PC-9 (cell line): ENCODE measurements at regions of chr3 and their contacts with region 1.

Region 1: DNA sequence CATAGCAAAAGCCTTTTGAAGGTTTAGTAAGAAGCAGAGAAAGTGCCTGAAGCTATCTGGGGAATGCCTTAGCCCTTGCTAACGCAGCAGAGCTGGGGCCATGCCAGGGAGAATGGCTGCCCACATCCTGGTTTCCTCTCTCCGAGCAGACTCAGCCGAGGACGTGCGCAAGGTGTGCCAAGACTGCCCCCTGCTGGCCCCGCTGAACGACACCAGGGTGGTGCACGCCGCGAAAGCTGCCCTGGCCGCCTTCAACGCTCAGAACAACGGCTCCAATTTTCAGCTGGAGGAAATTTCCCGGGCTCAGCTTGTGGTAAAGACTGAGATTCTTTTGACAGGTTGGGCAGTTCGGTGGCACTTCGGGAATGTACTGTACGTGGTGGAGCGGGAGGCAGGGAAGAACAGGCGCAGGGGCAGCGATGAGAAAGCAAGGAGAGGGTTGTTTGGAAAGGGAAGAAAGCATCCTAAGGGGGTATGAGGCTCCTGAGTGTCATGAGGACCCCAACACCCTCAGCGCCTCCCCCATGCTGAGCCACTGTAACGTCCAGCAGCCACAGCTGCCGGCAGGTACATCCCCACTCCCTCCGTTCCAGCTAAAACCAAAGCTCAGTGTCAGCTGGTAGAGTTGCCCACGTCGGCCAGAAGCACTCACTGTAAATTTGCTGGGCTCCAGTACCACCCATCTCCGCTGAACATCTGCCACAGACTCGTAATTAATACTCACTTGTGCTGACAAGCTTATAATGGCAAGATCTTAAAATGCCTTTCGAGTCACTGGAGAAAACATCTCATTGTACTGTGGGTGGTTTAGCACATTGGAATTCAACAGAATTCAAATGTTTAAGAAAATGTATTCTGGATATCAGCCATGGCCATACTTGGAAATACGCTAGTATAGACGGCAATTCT is 4.4 kb downstream of the AHSG start:
- DNase-seq: peak; percentile 99 to 100
- H3K4me3 ChIP-seq: peak overlapping the region; percentile 12; the same call in 1 of the 2 replicates
- H3K27ac ChIP-seq: no peak overlapping the region
- H3K4me1 ChIP-seq: peaks cover 16% of the 10 kb centered on the region
- H3K27me3 ChIP-seq: no peaks in the 10 kb centered on the region
- CTCF ChIP-seq: peak; percentile 99

Region 2: DNA sequence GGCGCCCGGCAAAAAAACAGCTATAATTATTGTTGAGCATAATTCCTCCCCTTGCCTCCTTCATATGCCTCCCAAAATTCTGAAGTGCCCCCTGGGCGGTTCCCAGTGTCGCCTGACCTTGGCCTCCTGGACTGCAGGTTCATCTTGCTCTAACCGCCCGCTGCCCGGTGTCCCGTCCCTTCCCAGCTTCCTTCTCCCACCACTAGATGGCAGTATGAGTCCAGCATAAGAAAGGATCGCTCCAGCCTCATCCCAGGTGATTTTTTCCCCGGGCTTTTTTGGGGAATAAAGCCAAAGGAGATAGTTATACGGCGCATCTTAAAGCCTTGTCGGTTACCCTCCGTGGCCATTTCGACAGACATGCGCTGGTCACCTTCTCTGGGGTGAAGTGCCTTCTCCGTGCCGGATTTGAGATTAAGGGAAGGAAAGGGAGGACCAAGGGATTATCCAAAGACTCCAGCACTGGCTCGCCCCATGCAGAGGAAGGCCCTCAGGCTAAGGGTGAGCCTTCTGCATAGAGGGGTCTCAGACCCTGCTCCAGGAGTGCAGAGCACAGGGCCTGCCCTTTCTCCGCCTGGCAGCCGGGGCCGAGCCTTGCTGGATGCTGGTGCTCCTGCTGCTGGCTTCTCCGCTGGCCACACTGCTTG is 633.7 kb before region 1 on chr3:
- CTCF ChIA-PET with region 1: interaction called, 19 read pairs
- POLR2A ChIA-PET with region 1: no interaction called
- intact Hi-C with region 1: loop called (anchors 1 kb)
- DNase-seq: peak; percentile 62 to 85
- H3K4me3 ChIP-seq: no peak overlapping the region
- H3K27ac ChIP-seq: no peak overlapping the region
- H3K4me1 ChIP-seq: no peaks in the 10 kb centered on the region
- H3K27me3 ChIP-seq: no peaks in the 10 kb centered on the region
- CTCF ChIP-seq: peak; percentile 99

Region 3: GRCh38 chr3:186551387-186551786 is 65.9 kb before region 1 on chr3:
- CTCF ChIA-PET with region 1: interaction called, 11 read pairs
- POLR2A ChIA-PET with region 1: no interaction called
- intact Hi-C with region 1: loop called (anchors 2 kb)
- DNase-seq: no peak
- H3K4me3 ChIP-seq: no peak overlapping the region
- H3K27ac ChIP-seq: no peak overlapping the region
- H3K4me1 ChIP-seq: no peaks in the 10 kb centered on the region
- H3K27me3 ChIP-seq: no peaks in the 10 kb centered on the region
- CTCF ChIP-seq: no peak; the same call in 1 of the 2 replicates

Region 4: DNA sequence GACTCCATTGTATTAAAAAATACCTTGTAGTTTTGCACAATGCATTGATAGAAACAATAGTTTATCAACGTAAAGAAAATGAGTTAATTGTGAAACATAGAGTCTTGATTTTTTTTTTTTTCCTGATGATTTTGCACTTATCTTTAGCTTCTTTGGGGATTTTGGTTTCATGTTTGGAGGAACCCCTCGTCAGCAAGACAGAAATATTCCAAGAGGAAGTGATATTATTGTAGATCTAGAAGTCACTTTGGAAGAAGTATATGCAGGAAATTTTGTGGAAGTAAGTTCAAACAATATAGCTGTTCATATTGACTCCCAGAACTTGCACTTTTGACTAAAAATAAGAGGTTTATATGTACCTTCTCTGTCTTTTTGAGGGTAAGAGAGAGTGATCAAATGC is 39.8 kb before region 1 on chr3:
- CTCF ChIA-PET with region 1: no interaction called
- POLR2A ChIA-PET with region 1: no interaction called
- intact Hi-C with region 1: no loop called
- DNase-seq: no peak
- H3K4me3 ChIP-seq: no peak overlapping the region
- H3K27ac ChIP-seq: no peak overlapping the region
- H3K4me1 ChIP-seq: no peaks in the 10 kb centered on the region
- H3K27me3 ChIP-seq: no peaks in the 10 kb centered on the region
- CTCF ChIP-seq: no peak

Region 5: DNA sequence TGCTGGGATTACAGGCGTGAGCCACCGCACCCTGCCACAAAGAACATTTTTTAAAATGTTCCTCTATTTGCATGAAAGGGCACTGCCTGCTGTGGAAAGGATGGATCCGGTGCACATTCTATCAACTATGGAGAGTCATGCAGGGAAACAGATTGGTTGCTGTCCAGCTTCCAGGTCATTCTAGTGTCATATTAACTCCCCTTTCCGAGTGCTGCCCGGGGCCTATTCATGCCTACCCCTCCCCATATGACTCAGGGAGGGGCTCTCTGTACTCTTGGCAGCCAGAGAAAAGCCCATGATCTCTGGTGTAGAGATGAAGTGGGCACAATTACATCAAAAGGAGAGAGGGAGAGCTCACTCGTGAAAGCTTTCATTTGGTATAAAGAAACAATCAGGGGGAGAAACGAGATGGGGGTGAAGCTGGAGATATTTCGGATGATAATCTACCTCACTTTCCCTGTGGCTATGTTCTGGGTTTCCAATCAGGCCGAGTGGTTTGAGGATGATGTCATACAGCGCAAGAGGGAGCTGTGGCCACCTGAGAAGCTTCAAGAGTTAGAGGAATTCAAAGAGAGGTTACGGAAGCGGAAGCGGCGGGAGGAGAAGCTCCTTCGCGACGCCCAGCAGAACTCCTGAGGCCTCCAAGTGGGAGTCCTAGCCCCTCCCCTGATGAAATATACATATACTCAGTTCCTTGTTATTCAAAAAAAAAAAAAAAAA is 20.6 kb before region 1 on chr3:
- CTCF ChIA-PET with region 1: interaction called, 12 read pairs
- POLR2A ChIA-PET with region 1: interaction called, 9 read pairs
- intact Hi-C with region 1: no loop called
- DNase-seq: peak; percentile 72 to 79
- H3K4me3 ChIP-seq: no peak overlapping the region
- H3K27ac ChIP-seq: peak overlapping the region; percentile 48
- H3K4me1 ChIP-seq: peaks cover 24% of the 10 kb centered on the region
- H3K27me3 ChIP-seq: no peaks in the 10 kb centered on the region
- CTCF ChIP-seq: no peak

Region 6: DNA sequence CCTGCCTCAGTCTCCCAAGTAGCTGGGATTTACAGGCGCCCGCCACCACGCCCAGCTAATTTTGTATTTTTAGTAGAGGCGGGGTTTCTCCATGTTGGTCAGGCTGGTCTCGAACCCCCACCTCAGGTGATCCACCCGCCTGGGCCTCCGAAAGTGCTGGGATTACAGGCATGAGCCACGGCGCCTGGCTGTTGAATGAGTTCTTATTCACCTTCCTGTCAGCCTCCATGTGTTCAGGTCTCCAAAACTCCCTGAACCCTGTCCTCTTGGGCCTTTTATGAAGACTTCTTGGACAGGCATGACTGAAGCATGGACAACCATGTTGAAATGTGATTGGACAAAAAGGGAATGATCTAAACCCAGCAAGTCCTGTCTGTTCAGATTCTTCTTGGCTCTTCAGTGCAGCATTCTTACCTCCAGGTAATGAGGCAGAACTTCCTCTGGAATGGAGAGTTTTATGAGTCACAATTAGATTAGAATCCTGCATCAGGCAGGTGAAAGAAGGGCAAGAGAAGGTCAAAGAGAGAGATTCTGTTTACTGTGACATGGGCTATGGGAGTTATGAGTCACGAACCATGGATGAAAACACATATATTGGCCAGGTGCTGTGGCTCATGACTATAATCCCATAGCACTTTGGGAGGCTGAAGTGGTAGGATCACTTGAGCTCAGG is 143.0 kb after region 1 on chr3:
- CTCF ChIA-PET with region 1: interaction called, 3 read pairs
- POLR2A ChIA-PET with region 1: no interaction called
- intact Hi-C with region 1: loop called (anchors 1 kb)
- DNase-seq: peak; percentile 65 to 100
- H3K4me3 ChIP-seq: no peak overlapping the region
- H3K27ac ChIP-seq: peak overlapping the region; percentile 71
- H3K4me1 ChIP-seq: peaks cover 21% of the 10 kb centered on the region
- H3K27me3 ChIP-seq: no peaks in the 10 kb centered on the region
- CTCF ChIP-seq: no peak

Region 7: GRCh38 chr3:186821429-186822367 is 204.4 kb after region 1 on chr3:
- CTCF ChIA-PET with region 1: interaction called, 16 read pairs
- POLR2A ChIA-PET with region 1: interaction called, 5 read pairs
- intact Hi-C with region 1: loop called (anchors 1 kb)
- DNase-seq: no peak
- H3K4me3 ChIP-seq: no peak overlapping the region
- H3K27ac ChIP-seq: no peak overlapping the region
- H3K4me1 ChIP-seq: peaks cover 9% of the 10 kb centered on the region
- H3K27me3 ChIP-seq: no peaks in the 10 kb centered on the region
- CTCF ChIP-seq: peak; percentile 92

Region 8: DNA sequence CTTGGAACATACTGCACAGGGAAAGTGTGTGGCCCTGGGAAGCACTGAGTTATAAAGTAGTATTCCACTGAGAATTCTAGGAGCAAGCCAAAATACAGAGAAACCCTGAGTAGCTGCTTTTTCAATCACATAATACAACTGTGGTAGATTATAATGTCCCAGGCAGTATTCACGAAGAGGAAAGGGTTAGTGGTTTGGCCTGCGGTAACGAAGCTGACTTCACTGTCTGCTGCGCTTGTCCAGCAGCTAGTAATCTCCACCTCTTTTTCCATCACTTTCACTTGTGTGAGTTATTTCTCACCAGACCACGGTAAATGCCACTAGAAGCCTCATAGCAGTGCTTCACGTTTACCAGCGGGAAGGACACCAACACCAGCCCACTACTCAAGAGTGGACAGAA is 487.6 kb after region 1 on chr3:
- CTCF ChIA-PET with region 1: no interaction called
- POLR2A ChIA-PET with region 1: no interaction called
- intact Hi-C with region 1: no loop called
- DNase-seq: no peak
- H3K4me3 ChIP-seq: no peak overlapping the region
- H3K27ac ChIP-seq: no peak overlapping the region
- H3K4me1 ChIP-seq: no peaks in the 10 kb centered on the region
- H3K27me3 ChIP-seq: no peaks in the 10 kb centered on the region
- CTCF ChIP-seq: no peak